Mammary epithelial cell (primary cell): ENCODE measurements at regions of chr7 and their contacts with region 1.

Region 1: DNA sequence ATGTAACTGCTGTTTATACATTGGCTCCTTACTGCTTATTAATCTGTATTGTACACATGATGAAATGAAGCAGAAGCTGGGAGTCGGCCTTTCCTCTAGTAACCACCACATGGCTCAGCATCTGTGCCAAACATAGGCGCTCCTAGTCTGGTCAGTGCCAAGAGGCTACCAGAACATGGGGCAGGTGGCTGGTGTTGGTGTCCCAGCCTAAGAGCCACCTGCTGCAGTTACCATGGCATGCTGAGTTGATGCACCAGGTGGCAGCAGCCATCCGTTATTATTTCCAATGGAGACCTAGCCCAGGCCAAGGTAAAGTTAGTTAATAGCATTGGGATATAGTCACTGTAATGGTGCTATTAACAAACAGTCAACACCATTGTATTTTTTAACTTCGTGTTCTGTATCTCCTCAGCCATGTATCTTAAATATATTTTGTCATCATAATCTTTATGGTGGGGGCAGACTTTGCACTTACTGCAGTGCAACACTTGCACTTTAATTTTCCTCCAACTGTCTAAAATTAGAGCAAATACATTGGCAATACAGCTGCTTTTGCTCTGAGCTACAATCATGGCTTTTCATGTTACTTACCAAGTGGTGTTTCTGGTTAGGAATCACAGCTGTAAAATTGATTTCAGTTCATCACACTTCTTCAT is 33.1 kb downstream of the HBP1 start:
- DNase-seq: peak; percentile 37
- H3K4me3 ChIP-seq: no peak overlapping the region
- H3K27ac ChIP-seq: no peak overlapping the region
- H3K4me1 ChIP-seq: no peaks in the 10 kb centered on the region
- H3K27me3 ChIP-seq: no peaks in the 10 kb centered on the region
- CTCF ChIP-seq: peak; percentile 69 to 71

Region 2: GRCh38 chr7:107078517-107078966 is 123.4 kb before region 1 on chr7:
- CTCF ChIA-PET with region 1: no interaction called
- dilution Hi-C with region 1: no loop called
- in situ Hi-C with region 1: no loop called
- intact Hi-C with region 1: no loop called
- DNase-seq: peak; percentile 24
- H3K4me3 ChIP-seq: no peak overlapping the region
- H3K27ac ChIP-seq: no peak overlapping the region
- H3K4me1 ChIP-seq: no peaks in the 10 kb centered on the region
- H3K27me3 ChIP-seq: peaks cover 3% of the 10 kb centered on the region
- CTCF ChIP-seq: no peak

Region 3: GRCh38 chr7:107501593-107501992 is 299.7 kb after region 1 on chr7:
- CTCF ChIA-PET with region 1: no interaction called
- dilution Hi-C with region 1: no loop called
- in situ Hi-C with region 1: no loop called
- intact Hi-C with region 1: loop called (anchors 1 kb)
- DNase-seq: peak; percentile 23
- H3K4me3 ChIP-seq: no peak overlapping the region
- H3K27ac ChIP-seq: no peak overlapping the region
- H3K4me1 ChIP-seq: peaks cover 15% of the 10 kb centered on the region
- H3K27me3 ChIP-seq: no peaks in the 10 kb centered on the region
- CTCF ChIP-seq: peak; percentile 50 to 57

Region 4: DNA sequence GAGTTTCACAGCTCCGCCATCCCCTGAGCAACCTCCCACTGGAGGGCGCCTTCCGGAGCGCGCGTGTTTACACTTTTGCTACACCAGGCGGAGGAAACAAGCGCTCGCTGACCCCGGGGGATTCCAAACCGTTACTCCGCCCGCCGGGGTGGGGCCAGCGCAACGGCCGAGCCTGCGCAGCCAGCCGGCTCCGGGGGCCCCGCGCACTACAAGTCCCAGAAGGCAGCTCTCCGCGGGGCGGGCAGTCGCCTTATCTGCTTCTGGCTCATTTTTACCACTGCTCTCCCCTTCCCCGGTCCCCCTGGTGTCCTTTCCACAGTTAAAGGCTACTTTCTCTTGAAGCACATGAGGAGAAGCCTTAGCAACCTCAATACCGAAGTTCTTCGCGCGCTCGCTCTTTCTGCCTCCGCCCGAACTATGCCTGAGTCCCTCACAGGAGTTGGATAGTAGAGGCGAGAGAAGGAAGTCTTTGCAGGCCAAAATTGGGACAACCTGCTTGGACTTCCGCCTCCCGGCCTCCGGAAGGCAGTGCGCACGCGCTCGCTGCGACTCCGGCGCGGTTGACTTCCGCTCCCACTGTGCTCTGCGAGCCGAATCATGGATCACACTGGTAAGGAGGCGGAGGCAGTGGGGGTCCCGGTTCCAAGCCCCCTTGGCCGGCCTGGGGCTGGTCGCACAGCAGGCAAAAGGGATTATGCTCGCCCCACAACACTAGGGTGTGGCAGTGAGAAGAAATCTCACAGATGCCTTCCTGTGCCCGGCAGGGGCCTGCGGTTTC is 541.8 kb after region 1 on chr7 and contains the start of gene CBLL1:
- CTCF ChIA-PET with region 1: no interaction called
- dilution Hi-C with region 1: no loop called
- in situ Hi-C with region 1: no loop called
- intact Hi-C with region 1: loop called (anchors 5 kb)
- DNase-seq: peak; percentile 94
- H3K4me3 ChIP-seq: peak within 1 kb of the TSS; percentile 75 to 99 (median 93)
- H3K27ac ChIP-seq: peak within 1 kb of the TSS; percentile 75
- H3K4me1 ChIP-seq: peaks cover 20% of the 10 kb centered on the region
- H3K27me3 ChIP-seq: no peaks in the 10 kb centered on the region
- CTCF ChIP-seq: peak; percentile 37 to 76
- total RNA-seq, gene CBLL1: 26.9 to 37.8 TPM